Activated CD4-positive, alpha-beta T cell treated with anti-CD3 and anti-CD28 coated beads for 36 hours (primary cell): ENCODE measurements at regions of chr17 and their contacts with region 1.

Region 1: GRCh38 chr17:76182016-76182764 is 41.1 kb upstream of the FOXJ1 start:
- DNase-seq: peak; percentile 98
- ATAC-seq: peak; percentile 76
- H3K4me3 Mint-ChIP-seq: peak overlapping the region; percentile 6
- H3K27ac Mint-ChIP-seq: peak overlapping the region; percentile 90
- H3K4me1 Mint-ChIP-seq: peaks cover 66% of the 10 kb centered on the region
- H3K27me3 Mint-ChIP-seq: no peaks in the 10 kb centered on the region

Region 2: GRCh38 chr17:75589012-75589918 is 592.9 kb before region 1 on chr17:
- CTCF ChIA-PET with region 1: no interaction called
- POLR2A ChIA-PET with region 1: no interaction called
- intact Hi-C with region 1: no loop called
- DNase-seq: peak; percentile 99
- ATAC-seq: peak; percentile 90
- H3K4me3 Mint-ChIP-seq: peak overlapping the region; percentile 72
- H3K27ac Mint-ChIP-seq: peak overlapping the region; percentile 42
- H3K4me1 Mint-ChIP-seq: no peaks in the 10 kb centered on the region
- H3K27me3 Mint-ChIP-seq: peaks cover 2% of the 10 kb centered on the region

Region 3: DNA sequence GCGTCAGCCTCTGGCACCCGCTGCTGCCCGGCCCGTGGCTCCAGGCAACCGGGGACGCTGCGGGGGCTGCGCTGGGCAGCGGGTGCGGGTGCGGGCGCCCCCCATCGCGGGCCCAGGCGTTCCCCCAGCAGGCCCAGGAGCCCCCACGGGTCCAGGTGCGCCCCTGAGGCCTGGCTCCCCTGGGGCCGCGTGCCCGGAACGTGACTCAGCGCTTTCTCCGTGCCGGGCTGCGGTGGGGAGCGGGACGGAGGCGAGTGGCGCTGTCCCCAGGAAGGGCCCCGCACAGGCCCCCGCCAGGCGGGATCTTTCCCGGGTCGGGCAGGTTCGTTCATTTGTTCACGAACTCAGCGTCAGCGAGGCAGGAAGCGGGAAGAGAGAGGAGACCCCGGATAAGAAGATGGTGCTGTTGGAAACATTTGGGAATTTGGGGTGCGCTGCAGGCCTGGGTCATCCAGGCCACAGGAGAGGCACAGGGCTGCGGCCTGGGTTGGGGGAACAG is 60.2 kb before region 1 on chr17:
- CTCF ChIA-PET with region 1: interaction called, 19 read pairs
- POLR2A ChIA-PET with region 1: interaction called, 5 read pairs
- intact Hi-C with region 1: loop called (anchors 1 to 2 kb)
- DNase-seq: peak; percentile 61
- ATAC-seq: peak; percentile 20
- H3K4me3 Mint-ChIP-seq: no peak overlapping the region
- H3K27ac Mint-ChIP-seq: peak overlapping the region; percentile 80
- H3K4me1 Mint-ChIP-seq: peaks cover 14% of the 10 kb centered on the region
- H3K27me3 Mint-ChIP-seq: no peaks in the 10 kb centered on the region

Region 4: GRCh38 chr17:76141212-76142038 is 40.8 kb before region 1 on chr17 and contains the start of gene FOXJ1:
- CTCF ChIA-PET with region 1: interaction called, 3 read pairs
- POLR2A ChIA-PET with region 1: interaction called, 4 read pairs
- intact Hi-C with region 1: loop called (anchors 1 to 5 kb)
- DNase-seq: peak; percentile 93
- ATAC-seq: peak; percentile 80
- H3K4me3 Mint-ChIP-seq: peak within 1 kb of the TSS; percentile 64
- H3K27ac Mint-ChIP-seq: no peak within 1 kb of the TSS
- H3K4me1 Mint-ChIP-seq: peaks cover 51% of the 10 kb centered on the region
- H3K27me3 Mint-ChIP-seq: peaks cover 9% of the 10 kb centered on the region
- total RNA-seq, gene FOXJ1: 0.47 to 0.53 TPM

Region 5: DNA sequence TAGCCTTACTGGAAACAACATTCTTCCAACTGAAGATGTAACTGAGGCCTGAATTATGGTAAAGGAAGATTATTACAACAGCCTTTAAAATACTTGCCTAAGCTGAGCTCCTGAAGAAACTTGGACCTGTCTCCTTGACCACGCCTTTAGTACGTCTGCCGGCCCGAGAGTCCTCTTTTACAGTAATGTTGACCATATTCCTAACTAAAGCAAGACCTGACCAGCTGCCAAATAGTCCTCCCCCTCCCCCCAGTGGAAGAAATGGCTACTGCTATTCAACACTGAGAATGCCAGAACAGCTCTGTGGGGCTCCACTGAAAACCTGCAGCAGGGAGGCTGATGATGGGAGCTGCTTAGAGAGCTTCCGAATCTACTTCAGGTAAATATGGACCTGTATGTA is 28.6 kb before region 1 on chr17:
- CTCF ChIA-PET with region 1: interaction called, 24 read pairs
- POLR2A ChIA-PET with region 1: no interaction called
- intact Hi-C with region 1: no loop called
- DNase-seq: no peak
- ATAC-seq: no peak
- H3K4me3 Mint-ChIP-seq: no peak overlapping the region
- H3K27ac Mint-ChIP-seq: no peak overlapping the region
- H3K4me1 Mint-ChIP-seq: peaks cover 36% of the 10 kb centered on the region
- H3K27me3 Mint-ChIP-seq: no peaks in the 10 kb centered on the region

Region 6: DNA sequence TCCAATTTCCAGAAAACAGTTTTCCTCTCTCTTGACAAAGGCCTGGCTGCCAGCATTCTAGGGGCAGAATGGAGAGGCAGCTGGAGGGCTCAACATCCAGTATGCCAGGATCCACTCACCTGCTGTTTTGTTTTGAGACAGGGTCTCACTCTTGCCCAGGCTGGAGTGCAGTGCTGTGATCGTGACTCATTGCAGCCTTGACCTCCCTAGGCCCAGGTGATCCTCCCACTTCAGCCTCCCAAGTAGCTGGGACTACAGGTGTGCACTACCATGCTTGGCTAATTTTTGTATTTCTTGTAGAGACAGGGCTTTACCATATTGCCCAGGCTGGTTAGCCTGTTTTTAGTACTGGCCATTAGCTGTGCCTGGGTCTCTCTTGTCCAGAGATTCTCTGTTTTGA is 12.1 kb before region 1 on chr17:
- CTCF ChIA-PET with region 1: interaction called, 12 read pairs
- POLR2A ChIA-PET with region 1: no interaction called
- intact Hi-C with region 1: no loop called
- DNase-seq: no peak
- ATAC-seq: no peak
- H3K4me3 Mint-ChIP-seq: no peak overlapping the region
- H3K27ac Mint-ChIP-seq: no peak overlapping the region
- H3K4me1 Mint-ChIP-seq: peaks cover 10% of the 10 kb centered on the region
- H3K27me3 Mint-ChIP-seq: no peaks in the 10 kb centered on the region

Region 7: DNA sequence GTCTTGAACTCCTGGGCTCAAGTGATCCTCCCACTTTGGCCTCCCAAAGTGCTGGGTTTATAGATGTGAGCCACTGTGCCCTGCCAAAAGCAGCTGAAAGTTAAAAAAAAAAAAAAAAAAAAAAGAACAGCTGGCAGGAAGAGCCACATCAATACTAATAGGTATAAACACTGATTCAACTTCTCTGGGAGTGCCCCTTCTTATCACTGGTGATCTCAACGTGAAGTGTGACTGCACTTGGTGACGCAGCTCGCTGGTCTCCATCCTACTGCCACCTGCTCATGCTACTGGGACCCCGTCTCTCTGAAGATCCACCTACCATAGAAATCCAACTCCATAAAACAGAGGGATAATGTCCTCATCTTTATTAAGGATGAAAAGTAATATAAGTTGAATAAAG is 17.3 kb after region 1 on chr17:
- CTCF ChIA-PET with region 1: interaction called, 7 read pairs
- POLR2A ChIA-PET with region 1: interaction called, 4 read pairs
- intact Hi-C with region 1: loop called in 1 of 2 experiments (anchors 1 kb)
- DNase-seq: peak; percentile 81
- ATAC-seq: peak; percentile 91
- H3K4me3 Mint-ChIP-seq: peak overlapping the region; percentile 21
- H3K27ac Mint-ChIP-seq: peak overlapping the region; percentile 92
- H3K4me1 Mint-ChIP-seq: peaks cover 64% of the 10 kb centered on the region
- H3K27me3 Mint-ChIP-seq: no peaks in the 10 kb centered on the region

Region 8: GRCh38 chr17:76219670-76220383 is 37.6 kb after region 1 on chr17:
- CTCF ChIA-PET with region 1: interaction called, 10 read pairs
- POLR2A ChIA-PET with region 1: no interaction called
- intact Hi-C with region 1: no loop called
- DNase-seq: no peak
- ATAC-seq: peak; percentile 72
- H3K4me3 Mint-ChIP-seq: no peak overlapping the region
- H3K27ac Mint-ChIP-seq: peak overlapping the region; percentile 67
- H3K4me1 Mint-ChIP-seq: peaks cover 33% of the 10 kb centered on the region
- H3K27me3 Mint-ChIP-seq: no peaks in the 10 kb centered on the region

Region 9: DNA sequence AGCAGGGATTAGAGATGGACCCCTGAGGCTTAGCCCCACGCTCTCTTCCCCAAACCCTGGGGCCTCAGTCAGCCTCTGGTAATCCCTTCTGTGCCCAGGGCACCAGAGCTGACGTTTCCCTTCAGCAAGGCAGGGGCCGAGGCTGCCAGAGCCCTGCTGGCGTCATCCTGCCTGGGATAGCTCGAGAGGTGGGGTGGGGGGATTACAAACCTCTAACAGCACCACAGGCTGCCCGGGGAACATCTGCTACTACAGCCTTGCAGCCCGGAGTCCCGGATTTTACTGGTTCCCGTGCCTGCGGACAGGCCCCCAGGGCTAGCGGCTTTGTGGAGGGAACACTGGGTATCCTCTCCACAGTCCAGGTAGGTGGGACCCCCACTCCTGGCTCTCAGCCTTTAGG is 285.2 kb after region 1 on chr17 and contains the start of gene AANAT:
- CTCF ChIA-PET with region 1: no interaction called
- POLR2A ChIA-PET with region 1: no interaction called
- intact Hi-C with region 1: no loop called
- DNase-seq: no peak
- ATAC-seq: no peak
- H3K4me3 Mint-ChIP-seq: no peak within 1 kb of the TSS
- H3K27ac Mint-ChIP-seq: no peak within 1 kb of the TSS
- H3K4me1 Mint-ChIP-seq: no peaks in the 10 kb centered on the region
- H3K27me3 Mint-ChIP-seq: no peaks in the 10 kb centered on the region
- total RNA-seq, gene AANAT: 0.16 TPM in 1 of 2 experiments, not detected in the other

Region 10: DNA sequence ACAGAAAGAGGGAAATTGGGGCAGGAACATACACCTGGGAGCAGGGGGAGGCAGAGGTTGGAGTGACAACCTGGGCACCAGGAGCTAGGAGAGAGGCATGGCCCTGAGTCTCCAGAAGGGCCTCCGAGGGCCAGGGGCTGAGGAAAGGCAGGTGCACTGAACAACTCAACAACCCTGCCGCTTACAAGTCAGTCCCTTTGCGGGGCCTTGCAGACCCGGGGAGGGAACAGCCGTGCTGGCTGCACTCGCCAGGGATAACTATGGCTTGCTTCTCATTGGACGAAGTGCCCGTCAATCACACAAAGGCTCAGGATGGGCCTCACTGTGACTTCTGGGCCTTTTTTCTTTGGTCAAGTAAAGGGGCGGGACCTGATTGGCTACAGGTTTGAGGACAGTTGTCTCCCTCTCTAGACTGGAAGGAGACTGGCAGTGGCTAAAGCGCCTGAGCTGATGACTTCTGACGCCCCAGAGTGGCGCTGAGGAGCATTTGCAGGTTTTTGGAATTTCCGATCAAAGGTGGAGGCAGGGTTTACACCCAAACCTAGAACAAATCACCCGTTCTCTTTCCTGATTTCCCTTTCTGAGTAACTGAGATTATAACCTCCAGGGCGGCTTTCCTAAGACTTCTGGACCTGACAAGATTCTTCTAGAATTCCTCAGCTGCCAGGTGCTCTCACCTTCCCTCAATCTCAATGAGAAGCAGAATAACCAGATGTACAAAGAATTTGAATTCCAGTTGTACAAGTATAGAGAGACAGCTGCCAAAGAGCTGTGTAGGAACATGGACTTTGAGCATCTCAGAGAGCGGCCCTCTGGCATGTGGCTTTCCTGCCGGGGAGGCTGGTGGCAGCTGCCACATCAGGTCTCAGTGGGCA is 431.0 kb after region 1 on chr17:
- CTCF ChIA-PET with region 1: no interaction called
- POLR2A ChIA-PET with region 1: no interaction called
- intact Hi-C with region 1: no loop called
- DNase-seq: no peak
- ATAC-seq: no peak
- H3K4me3 Mint-ChIP-seq: no peak overlapping the region
- H3K27ac Mint-ChIP-seq: no peak overlapping the region
- H3K4me1 Mint-ChIP-seq: no peaks in the 10 kb centered on the region
- H3K27me3 Mint-ChIP-seq: no peaks in the 10 kb centered on the region